T-cell (primary cell): ENCODE measurements at regions of chr4 and their contacts with region 1.

Region 1: DNA sequence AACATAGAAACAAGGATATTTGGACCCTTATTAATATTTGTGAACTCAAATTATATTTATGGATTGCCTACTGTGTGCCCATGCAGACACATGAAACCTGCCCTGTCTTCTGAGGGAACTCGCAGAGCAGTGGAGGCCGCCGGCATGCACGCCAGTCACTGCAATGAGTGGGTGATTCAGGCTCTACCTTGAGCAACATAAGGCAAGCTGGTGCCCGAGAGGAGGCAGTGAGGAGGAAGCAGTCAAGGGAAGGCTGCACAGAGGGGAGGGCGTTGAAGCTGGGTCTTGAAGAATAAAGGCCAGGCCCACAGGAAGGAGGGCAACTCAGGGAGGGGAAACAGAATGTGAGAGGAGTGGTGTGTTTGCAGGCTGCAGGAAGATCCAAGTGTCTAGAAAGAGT is 52.8 kb downstream of the PPEF2 start:
- DNase-seq: no peak
- ATAC-seq: no peak
- H3K4me3 ChIP-seq: no peak overlapping the region
- H3K4me3 Mint-ChIP-seq: no peak overlapping the region
- H3K27ac ChIP-seq: no peak overlapping the region
- H3K27ac Mint-ChIP-seq: no peak overlapping the region
- H3K4me1 ChIP-seq: peaks cover 0 to 4% of the 10 kb centered on the region in 2 experiments
- H3K4me1 Mint-ChIP-seq: no peaks in the 10 kb centered on the region
- H3K27me3 ChIP-seq: peaks cover 0 to 4% of the 10 kb centered on the region in 2 experiments
- H3K27me3 Mint-ChIP-seq: peaks cover 4 to 13% of the 10 kb centered on the region in 2 donors

Region 2: DNA sequence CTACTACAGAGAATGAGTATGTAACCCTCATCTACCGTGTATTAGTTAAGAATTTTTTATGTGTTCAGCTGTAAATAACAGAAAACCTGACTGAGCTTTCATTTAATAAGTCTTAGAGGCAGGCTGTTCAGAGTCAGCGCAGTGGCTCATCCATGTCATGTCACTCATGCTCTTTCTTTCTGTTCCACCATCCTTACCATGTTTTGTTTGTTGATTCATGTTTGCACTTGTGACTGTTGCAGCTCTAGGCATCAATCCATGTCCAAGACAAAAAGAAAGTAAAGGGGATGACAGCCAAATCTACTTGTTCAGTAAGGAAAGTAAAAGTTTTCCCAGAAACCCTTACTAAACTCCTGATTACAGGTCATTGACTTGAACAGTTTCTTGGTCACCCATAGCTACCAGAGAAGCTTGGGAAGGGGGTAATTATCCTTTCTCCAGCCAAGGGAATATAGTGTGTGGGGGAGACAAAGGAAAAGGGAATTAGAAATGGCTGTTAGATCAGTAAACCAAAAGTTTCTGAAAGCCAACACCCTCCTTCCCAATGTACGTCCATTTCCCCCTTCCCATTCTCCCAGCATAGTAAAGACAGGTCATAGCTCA is 234.0 kb after region 1 on chr4:
- CTCF ChIA-PET with region 1: no interaction called
- POLR2A ChIA-PET with region 1: interaction called in 1 of 2 experiments, 11 read pairs
- DNase-seq: no peak
- ATAC-seq: no peak
- H3K4me3 ChIP-seq: no peak overlapping the region
- H3K4me3 Mint-ChIP-seq: no peak overlapping the region
- H3K27ac ChIP-seq: no peak overlapping the region
- H3K27ac Mint-ChIP-seq: no peak overlapping the region
- H3K4me1 ChIP-seq: no peaks in the 10 kb centered on the region
- H3K4me1 Mint-ChIP-seq: no peaks in the 10 kb centered on the region
- H3K27me3 ChIP-seq: no peaks in the 10 kb centered on the region
- H3K27me3 Mint-ChIP-seq: peaks cover 5 to 10% of the 10 kb centered on the region in 2 donors